ENCODE measurements at regions of chr1 and their contacts with region 1.

Region 1: GRCh38 chr1:32400876-32401631 is 6.8 kb upstream of the BSDC1 start:
- DNase-seq: peak; percentile 48
- H3K4me3 ChIP-seq: no peak overlapping the region
- H3K27ac ChIP-seq: no peak overlapping the region
- H3K27me3 ChIP-seq: no peaks in the 10 kb centered on the region
- CTCF ChIP-seq: peak; percentile 92

Region 2: GRCh38 chr1:32413507-32414185 is 12.6 kb after region 1 on chr1:
- CTCF ChIA-PET with region 1: interaction called, 81 read pairs
- POLR2A ChIA-PET with region 1: interaction called, 3 read pairs
- DNase-seq: no peak
- H3K4me3 ChIP-seq: no peak overlapping the region
- H3K27ac ChIP-seq: no peak overlapping the region
- H3K27me3 ChIP-seq: peaks cover 2% of the 10 kb centered on the region
- CTCF ChIP-seq: peak; percentile 83

Region 3: GRCh38 chr1:32619701-32620485 is 218.8 kb after region 1 on chr1:
- CTCF ChIA-PET with region 1: interaction called, 21 read pairs
- POLR2A ChIA-PET with region 1: no interaction called
- DNase-seq: no peak
- H3K4me3 ChIP-seq: no peak overlapping the region
- H3K27ac ChIP-seq: no peak overlapping the region
- H3K27me3 ChIP-seq: no peaks in the 10 kb centered on the region
- CTCF ChIP-seq: peak; percentile 29

Region 4: GRCh38 chr1:32773018-32773763 is 372.1 kb after region 1 on chr1:
- CTCF ChIA-PET with region 1: interaction called, 13 read pairs
- POLR2A ChIA-PET with region 1: no interaction called
- DNase-seq: peak; percentile 47
- H3K4me3 ChIP-seq: no peak overlapping the region
- H3K27ac ChIP-seq: no peak overlapping the region
- H3K27me3 ChIP-seq: peaks cover 2% of the 10 kb centered on the region
- CTCF ChIP-seq: peak; percentile 97

Measured in AG04450 (cell line).